ENCODE measurements at regions of chr17 and their contacts with region 1.

Region 1: GRCh38 chr17:38674749-38675615 is at the start of gene EPOP:
- DNase-seq: peak; percentile 94 to 98 (median 98)
- ATAC-seq: peak; percentile 92
- H3K4me3 ChIP-seq: peak within 1 kb of the TSS; percentile 56
- H3K27ac ChIP-seq: peak within 1 kb of the TSS; percentile 74
- H3K4me1 ChIP-seq: peaks cover 20 to 30% of the 10 kb centered on the region in 2 experiments
- H3K27me3 ChIP-seq: peaks cover 0 to 6% of the 10 kb centered on the region in 2 experiments; a peak in 2 of 5 replicates
- CTCF ChIP-seq: no peak
- EP300 ChIP-seq: no peak
- POLR2A ChIP-seq: peak; percentile 65
- RAD21 ChIP-seq: no peak
- polyA plus RNA-seq, gene EPOP: 0.41 to 0.62 TPM

Region 2: DNA sequence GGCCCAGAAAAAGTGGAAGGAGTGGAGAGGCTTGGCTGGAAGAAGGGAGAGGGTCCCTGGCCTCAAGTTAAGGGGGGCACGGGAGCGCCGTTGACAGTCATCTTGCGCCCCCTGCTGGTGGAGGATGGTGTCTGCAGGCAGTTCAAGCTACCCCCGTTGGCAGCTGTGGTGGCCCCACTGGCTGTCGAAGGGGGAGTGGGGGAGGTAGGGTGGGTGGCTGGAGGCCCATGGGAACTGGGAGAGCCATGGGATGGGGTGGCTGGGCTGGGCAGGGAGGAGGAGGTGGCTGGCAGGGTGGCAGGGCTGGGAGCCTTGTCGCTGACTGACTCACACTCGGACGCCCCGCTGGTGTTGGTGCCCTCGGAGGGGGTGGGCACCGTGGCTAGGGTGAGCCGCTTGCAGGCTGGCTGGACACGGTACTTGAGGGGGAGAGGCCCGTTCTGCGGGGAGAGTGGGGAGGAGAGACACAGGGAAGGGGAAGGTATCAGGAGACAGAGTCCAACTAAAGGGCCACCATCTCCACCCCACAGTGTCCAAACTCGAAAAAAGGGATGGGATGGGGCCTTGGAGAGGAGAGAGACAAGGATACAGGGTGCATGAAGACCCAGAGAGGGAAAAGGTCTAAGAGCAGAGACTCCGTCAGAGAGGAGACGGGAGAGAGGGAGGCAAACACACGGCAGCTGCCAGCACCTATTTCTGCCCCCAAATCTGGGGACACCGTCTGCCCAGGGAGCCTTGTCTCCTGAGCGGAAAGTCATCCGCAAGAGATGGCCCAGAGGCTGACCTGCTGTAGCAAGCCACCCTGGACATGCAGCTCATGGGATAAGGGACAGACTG is 60.4 kb after region 1 on chr17:
- CTCF ChIA-PET with region 1: interaction called, 25 read pairs
- POLR2A ChIA-PET with region 1: no interaction called
- in situ Hi-C with region 1: loop called (anchors 5 kb)
- intact Hi-C with region 1: loop called (anchors 1 kb)
- DNase-seq: peak; percentile 72 to 82 (median 80)
- ATAC-seq: peak; percentile 58
- H3K4me3 ChIP-seq: no peak overlapping the region
- H3K27ac ChIP-seq: no peak overlapping the region
- H3K4me1 ChIP-seq: peaks cover 21 to 57% of the 10 kb centered on the region in 2 experiments; a peak in 4 of 5 replicates
- H3K27me3 ChIP-seq: no peaks in the 10 kb centered on the region
- CTCF ChIP-seq: peak; percentile 77 to 90 (median 83)
- EP300 ChIP-seq: no peak
- POLR2A ChIP-seq: peak; percentile 51
- RAD21 ChIP-seq: peak; percentile 70 to 76

Region 3: GRCh38 chr17:38752119-38752929 is 77.3 kb after region 1 on chr17 and contains the start of gene PSMB3:
- CTCF ChIA-PET with region 1: no interaction called
- POLR2A ChIA-PET with region 1: interaction called, 3 read pairs
- in situ Hi-C with region 1: no loop called
- intact Hi-C with region 1: loop called (anchors 5 kb)
- DNase-seq: peak; percentile 95 to 99 (median 97)
- ATAC-seq: peak; percentile 84
- H3K4me3 ChIP-seq: peak within 1 kb of the TSS; percentile 74
- H3K27ac ChIP-seq: peak within 1 kb of the TSS; percentile 87
- H3K4me1 ChIP-seq: peaks cover 7 to 42% of the 10 kb centered on the region in 2 experiments
- H3K27me3 ChIP-seq: no peaks in the 10 kb centered on the region
- CTCF ChIP-seq: no peak
- EP300 ChIP-seq: peak; percentile 25; the same call in 1 of the 2 replicates
- POLR2A ChIP-seq: peak; percentile 90
- RAD21 ChIP-seq: no peak
- polyA plus RNA-seq, gene PSMB3: 2,413 to 2,775 TPM